PC-9 (cell line): ENCODE measurements at regions of chr11 and their contacts with region 1.

Region 1: GRCh38 chr11:47980245-47981049 is at the start of gene PTPRJ:
- DNase-seq: peak in 1 of 2 experiments; percentile 66
- H3K4me3 ChIP-seq: peak within 1 kb of the TSS; percentile 93
- H3K27ac ChIP-seq: peak within 1 kb of the TSS; percentile 14; the same call in 1 of the 2 replicates
- H3K4me1 ChIP-seq: peaks cover 54% of the 10 kb centered on the region
- H3K27me3 ChIP-seq: no peaks in the 10 kb centered on the region
- CTCF ChIP-seq: no peak
- total RNA-seq, gene PTPRJ: 43.3 and 43.7 TPM in 2 replicates

Region 2: DNA sequence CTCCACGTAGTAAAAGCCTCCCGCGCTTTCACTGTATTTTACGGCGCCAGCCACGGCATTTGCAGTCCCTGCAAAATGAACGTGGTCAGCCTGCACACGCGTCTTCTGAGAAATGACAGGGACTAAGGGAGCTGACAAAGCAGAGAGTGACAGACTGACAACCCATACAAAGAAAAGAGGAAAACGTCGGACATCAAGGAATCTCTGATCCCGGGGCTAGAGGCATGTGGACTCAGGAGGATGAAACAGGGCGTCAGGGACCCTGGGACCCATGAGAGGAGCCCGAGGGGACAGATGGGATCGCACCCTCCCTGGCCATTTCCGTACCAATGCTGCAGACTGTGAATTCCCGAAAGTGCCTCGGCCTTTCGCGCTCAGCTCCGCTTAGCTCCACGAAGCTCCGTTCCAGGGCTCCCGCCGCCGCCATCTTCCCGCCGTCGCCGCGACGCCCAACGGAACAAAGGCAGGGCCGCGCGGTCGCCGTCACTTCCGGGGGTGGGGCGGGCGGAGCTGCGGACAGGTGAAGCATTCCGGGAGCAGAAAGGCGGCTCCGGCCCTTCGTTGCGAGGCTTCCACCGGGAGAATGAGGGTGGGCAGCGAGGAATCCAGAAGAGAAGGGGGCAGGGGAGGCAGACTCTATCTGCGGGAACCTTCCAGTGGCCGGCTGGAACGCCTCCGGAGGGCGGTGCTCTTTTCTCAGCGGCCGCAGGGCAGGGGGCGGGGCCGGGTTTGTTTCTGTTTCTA is 132.4 kb before region 1 on chr11 and contains the start of gene NUP160:
- CTCF ChIA-PET with region 1: no interaction called
- POLR2A ChIA-PET with region 1: no interaction called
- intact Hi-C with region 1: loop called (anchors 2 kb)
- DNase-seq: peak; percentile 60 to 84
- H3K4me3 ChIP-seq: peak within 1 kb of the TSS; percentile 96
- H3K27ac ChIP-seq: peak within 1 kb of the TSS; percentile 72
- H3K4me1 ChIP-seq: peaks cover 16% of the 10 kb centered on the region
- H3K27me3 ChIP-seq: no peaks in the 10 kb centered on the region
- CTCF ChIP-seq: no peak
- total RNA-seq, gene NUP160: 61.7 and 73.2 TPM in 2 replicates

Region 3: DNA sequence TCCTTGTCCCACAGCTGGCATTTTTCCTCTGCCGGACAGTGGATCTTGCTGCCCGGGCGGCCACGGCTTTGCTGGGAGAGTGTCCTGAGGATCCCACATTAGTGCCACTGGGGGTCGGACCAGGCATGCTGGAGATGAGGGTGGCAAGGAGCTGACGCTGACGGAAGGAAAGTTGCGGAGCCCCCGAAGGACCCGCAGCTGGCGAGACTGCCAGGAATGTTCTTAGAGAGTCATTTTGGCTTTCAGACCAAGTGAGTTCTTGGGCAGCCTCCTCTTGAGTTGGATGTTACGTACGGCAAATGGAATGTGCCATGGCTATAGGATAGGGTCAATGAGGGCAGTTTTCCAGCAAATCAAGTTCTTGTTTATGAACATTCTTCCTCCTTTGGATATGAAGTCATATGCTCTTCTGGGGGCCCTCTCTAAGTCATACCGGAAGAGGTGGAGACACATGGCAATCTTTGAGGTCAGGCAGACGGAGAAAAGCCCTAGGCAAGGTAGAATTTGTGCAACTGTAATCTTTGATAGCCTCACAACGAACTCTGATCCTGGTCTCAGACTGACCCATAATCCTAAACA is 74.9 kb before region 1 on chr11:
- CTCF ChIA-PET with region 1: no interaction called
- POLR2A ChIA-PET with region 1: interaction called, 10 read pairs
- intact Hi-C with region 1: no loop called
- DNase-seq: peak; percentile 69 to 91
- H3K4me3 ChIP-seq: no peak overlapping the region
- H3K27ac ChIP-seq: peak overlapping the region; percentile 38; the same call in 1 of the 2 replicates
- H3K4me1 ChIP-seq: peaks cover 6% of the 10 kb centered on the region
- H3K27me3 ChIP-seq: no peaks in the 10 kb centered on the region
- CTCF ChIP-seq: no peak

Region 4: GRCh38 chr11:47967577-47968425 is 12.6 kb before region 1 on chr11:
- CTCF ChIA-PET with region 1: interaction called, 14 read pairs
- POLR2A ChIA-PET with region 1: no interaction called
- intact Hi-C with region 1: no loop called
- DNase-seq: peak in 1 of 2 experiments; percentile 33
- H3K4me3 ChIP-seq: no peak overlapping the region
- H3K27ac ChIP-seq: no peak overlapping the region
- H3K4me1 ChIP-seq: peaks cover 11% of the 10 kb centered on the region
- H3K27me3 ChIP-seq: no peaks in the 10 kb centered on the region
- CTCF ChIP-seq: no peak

Region 5: GRCh38 chr11:48063424-48063978 is 83.1 kb after region 1 on chr11:
- CTCF ChIA-PET with region 1: no interaction called
- POLR2A ChIA-PET with region 1: no interaction called
- intact Hi-C with region 1: loop called (anchors 2 kb)
- DNase-seq: peak; percentile 62 to 98
- H3K4me3 ChIP-seq: peak overlapping the region; percentile 27; the same call in 1 of the 2 replicates
- H3K27ac ChIP-seq: peak overlapping the region; percentile 95
- H3K4me1 ChIP-seq: peaks cover 73% of the 10 kb centered on the region
- H3K27me3 ChIP-seq: no peaks in the 10 kb centered on the region
- CTCF ChIP-seq: no peak

Region 6: DNA sequence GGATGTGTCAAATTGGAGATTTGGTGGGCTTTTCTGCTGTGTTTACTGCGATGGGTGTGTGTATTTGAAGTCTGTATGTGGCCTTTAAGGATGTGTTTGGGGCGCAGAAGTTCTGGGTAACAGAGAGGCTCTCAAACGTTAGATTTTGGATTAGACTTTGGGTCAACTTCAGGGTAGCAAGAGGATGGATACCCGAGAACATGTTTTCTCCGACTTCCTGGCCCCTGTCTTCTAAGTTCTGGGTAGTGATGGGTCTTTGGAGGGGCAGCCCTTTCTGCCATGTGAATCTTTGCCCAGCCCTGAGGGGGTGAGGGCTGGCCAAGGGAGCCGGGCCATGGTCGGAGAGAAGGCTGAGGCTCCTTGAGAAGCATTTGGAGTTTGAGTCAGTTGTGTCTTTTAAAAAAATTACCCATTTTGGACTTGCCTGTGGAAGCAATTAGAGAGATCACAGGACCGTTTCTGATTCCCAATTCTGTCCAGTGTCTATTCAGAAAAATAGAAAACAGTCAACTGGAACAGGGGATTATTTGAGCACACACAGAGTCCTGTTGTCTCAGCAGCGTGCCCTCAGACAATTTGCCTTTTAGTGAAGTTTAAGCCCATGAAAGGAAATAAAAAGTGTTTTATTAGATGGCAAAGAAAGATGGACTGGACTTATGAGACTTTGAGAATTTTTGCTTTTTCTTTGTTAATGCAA is 114.3 kb after region 1 on chr11:
- CTCF ChIA-PET with region 1: no interaction called
- POLR2A ChIA-PET with region 1: no interaction called
- intact Hi-C with region 1: no loop called
- DNase-seq: no peak
- H3K4me3 ChIP-seq: no peak overlapping the region
- H3K27ac ChIP-seq: no peak overlapping the region
- H3K4me1 ChIP-seq: peaks cover 44% of the 10 kb centered on the region
- H3K27me3 ChIP-seq: no peaks in the 10 kb centered on the region
- CTCF ChIP-seq: no peak